ENCODE measurements at regions of chr20 and their contacts with region 1.

Region 1: DNA sequence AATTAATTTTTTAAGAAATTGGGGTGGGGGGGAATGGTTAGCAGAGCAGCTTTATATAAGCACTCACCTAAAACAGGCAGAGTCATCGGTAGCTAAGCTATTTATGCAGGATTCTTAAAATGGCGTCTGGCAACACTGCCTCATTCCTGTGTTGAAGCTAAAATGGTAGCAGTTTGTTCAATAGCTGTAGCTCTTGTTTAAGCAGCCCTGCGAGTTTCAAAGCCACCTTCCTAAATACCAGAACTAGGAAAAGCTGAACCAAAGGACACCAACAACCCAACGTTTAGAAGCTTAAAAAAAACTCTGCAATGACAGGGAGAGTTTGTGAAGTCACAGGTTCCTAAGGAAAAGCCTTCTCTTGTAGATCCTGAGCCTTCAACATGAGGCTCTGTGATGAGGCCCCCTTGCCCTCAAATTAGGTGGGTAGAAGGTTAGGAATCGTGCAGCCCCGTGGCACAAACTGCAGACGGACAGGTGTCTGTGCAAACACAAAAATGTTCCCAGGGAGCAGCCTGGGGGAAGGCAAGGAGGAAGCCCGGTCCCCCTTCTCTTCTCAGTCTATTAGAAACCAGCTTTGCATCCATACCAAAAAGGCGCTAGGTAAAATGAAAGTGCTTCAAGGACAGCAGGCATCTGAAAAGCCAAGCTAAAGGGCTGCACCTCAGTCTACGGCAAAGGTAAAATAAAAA is 4.7 kb downstream of the ZMYND8 start:
- DNase-seq: no peak
- ATAC-seq: peak; percentile 18

Region 2: GRCh38 chr20:47164140-47164539 is 187.6 kb before region 1 on chr20:
- intact Hi-C with region 1: no loop called
- DNase-seq: no peak
- ATAC-seq: no peak

Region 3: DNA sequence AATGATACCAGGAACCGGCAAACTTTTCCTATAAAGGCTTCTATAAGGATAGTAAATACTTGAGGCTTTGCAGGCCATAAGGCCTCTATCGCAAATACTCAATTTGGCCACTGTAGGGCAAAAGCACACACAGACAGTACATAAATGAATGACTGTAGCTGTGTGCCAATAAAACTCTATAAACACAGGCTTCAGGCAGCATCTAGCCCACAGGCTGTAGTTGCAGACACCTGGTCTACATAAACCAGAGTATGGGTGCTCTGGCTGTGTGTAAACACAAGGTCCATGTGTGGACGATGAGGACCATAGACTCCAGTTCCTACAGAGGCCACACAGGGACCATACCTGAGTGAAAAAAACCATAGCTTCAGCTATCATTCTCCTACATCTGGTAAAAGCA is 47.5 kb before region 1 on chr20:
- intact Hi-C with region 1: no loop called
- DNase-seq: no peak
- ATAC-seq: no peak

Region 4: GRCh38 chr20:47336129-47336835 is 15.5 kb before region 1 on chr20:
- intact Hi-C with region 1: loop called (anchors 2 kb)
- DNase-seq: no peak
- ATAC-seq: peak; percentile 62

Measured in Right ventricle myocardium inferior (tissue), 1 donor.